ENCODE measurements at regions of chr19 and their contacts with region 1.

Region 1: DNA sequence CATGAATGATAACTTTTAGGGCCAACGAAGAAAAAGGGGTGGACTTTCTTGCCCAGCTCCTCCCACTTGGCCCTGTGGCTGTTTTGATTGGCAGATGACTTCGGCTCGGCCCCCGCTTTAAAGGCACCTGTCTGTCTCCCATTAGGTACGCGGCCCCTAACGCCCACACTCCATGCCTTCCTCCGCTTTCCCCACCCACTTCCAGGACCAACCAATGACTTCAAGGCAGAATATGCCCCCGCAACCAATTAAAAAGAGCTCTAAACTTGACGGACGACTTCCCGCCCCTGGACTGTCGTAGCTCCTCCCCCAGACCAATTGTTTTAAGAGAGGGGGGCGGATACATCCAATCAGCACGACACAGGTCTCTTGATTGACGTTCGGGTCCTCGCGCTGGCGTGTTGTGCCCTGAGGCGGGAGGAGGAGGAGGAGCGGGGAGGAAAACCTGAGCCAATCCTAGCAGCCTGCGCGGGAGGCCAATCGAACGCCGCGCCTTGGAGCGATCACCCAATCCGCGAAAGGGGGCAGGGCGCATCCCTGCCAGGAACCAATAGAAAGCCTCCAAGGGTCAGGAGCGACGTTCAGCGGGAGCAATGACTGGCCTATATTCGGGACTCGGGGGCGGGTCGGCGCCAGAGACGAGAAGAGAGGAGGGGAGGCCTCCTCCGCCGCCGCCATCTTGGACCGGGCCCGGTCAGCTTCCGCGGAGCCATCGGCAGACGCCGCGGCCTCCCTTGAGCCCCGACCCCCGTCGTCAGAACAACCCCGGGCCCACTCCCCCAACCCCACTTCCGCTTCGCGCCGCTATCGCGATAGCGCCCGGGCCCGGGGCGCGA is at the start of gene CNOT3:
- DNase-seq: peak; percentile 99 to 100 (median 100)
- ATAC-seq: peak; percentile 91 to 95 (median 94)
- H3K4me3 ChIP-seq: peak within 1 kb of the TSS; percentile 74 to 100 (median 96)
- H3K27ac ChIP-seq: peak within 1 kb of the TSS; percentile 86 to 100 (median 95)
- H3K4me1 ChIP-seq: peaks cover 5 to 48% (median 36%) of the 10 kb centered on the region in 12 donors
- H3K27me3 ChIP-seq: peaks cover 0 to 3% (median 0%) of the 10 kb centered on the region in 9 donors
- CTCF ChIP-seq: no peak
- POLR2A ChIP-seq: peak; percentile 89 to 94
- total RNA-seq, gene CNOT3: 12.6 to 28.2 (median 18.5) TPM

Region 2: DNA sequence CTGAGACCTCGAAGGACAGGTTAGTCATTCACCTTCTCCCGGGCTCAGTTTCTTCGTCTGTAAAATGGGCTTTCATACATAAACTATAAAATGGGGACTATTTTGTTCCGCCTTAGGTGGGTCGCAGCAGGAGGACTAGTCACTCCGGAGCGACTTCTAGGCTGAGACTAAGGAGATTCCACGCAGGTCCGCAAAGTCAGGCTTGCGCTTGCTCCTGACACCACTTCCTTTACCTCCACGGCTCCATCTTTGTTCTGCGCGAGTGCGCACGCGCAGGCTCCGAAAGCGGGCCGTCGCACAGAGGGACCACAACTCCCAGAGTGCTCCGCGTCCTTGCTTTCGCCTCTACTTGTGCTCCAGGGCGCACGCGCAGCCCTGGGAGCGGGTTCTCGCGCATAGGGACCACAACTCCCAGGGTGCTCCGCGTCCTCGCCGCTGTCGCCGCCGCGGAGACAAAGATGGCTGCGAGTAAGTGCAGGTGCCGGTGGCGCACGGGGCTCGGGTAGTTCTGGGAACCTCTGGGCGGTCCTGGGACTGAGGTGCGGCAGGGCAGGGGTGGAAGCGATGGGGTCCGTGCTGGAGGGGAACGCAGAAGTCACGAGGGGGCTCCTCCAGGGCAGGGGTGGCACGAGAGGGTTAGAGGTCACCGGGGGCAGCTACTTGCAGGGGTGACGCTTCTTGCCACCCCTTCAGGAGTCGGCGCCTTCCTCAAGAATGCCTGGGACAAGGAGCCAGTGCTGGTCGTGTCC is 34.7 kb before region 1 on chr19 and contains the start of gene NDUFA3:
- intact Hi-C with region 1: loop called in 1 of 10 experiments (anchors 2 kb)
- DNase-seq: peak; percentile 98 to 99 (median 99)
- ATAC-seq: peak; percentile 99 to 100 (median 99)
- H3K4me3 ChIP-seq: peak within 1 kb of the TSS; percentile 60 to 98 (median 88)
- H3K27ac ChIP-seq: peak within 1 kb of the TSS; percentile 25 to 91 (median 82)
- H3K4me1 ChIP-seq: peaks cover 3 to 18% (median 11%) of the 10 kb centered on the region in 12 donors
- H3K27me3 ChIP-seq: peaks cover 0 to 9% (median 0%) of the 10 kb centered on the region in 9 donors
- CTCF ChIP-seq: no peak
- POLR2A ChIP-seq: peak; percentile 36 to 87
- total RNA-seq, gene NDUFA3: 32.2 to 501 (median 299) TPM

Region 3: GRCh38 chr19:54115109-54116063 is 21.9 kb before region 1 on chr19 and contains the starts of genes PRPF31 and TFPT:
- intact Hi-C with region 1: loop called in 1 of 10 experiments (anchors 1 kb)
- DNase-seq: peak; percentile 96 to 98 (median 98)
- ATAC-seq: peak; percentile 93 to 96 (median 94)
- H3K4me3 ChIP-seq: peak within 1 kb of the TSS; percentile 57 to 99 (median 80)
- H3K27ac ChIP-seq: peak within 1 kb of the TSS; percentile 78 to 95 (median 92)
- H3K4me1 ChIP-seq: peaks cover 4 to 26% (median 22%) of the 10 kb centered on the region in 12 donors
- H3K27me3 ChIP-seq: no peaks in the 10 kb centered on the region
- CTCF ChIP-seq: no peak
- POLR2A ChIP-seq: peak in 1 of 2 donors; percentile 47
- total RNA-seq, gene PRPF31: 30.0 to 58.4 (median 37.8) TPM
- total RNA-seq, gene TFPT: 9.6 to 23.1 (median 12.5) TPM

Region 4: DNA sequence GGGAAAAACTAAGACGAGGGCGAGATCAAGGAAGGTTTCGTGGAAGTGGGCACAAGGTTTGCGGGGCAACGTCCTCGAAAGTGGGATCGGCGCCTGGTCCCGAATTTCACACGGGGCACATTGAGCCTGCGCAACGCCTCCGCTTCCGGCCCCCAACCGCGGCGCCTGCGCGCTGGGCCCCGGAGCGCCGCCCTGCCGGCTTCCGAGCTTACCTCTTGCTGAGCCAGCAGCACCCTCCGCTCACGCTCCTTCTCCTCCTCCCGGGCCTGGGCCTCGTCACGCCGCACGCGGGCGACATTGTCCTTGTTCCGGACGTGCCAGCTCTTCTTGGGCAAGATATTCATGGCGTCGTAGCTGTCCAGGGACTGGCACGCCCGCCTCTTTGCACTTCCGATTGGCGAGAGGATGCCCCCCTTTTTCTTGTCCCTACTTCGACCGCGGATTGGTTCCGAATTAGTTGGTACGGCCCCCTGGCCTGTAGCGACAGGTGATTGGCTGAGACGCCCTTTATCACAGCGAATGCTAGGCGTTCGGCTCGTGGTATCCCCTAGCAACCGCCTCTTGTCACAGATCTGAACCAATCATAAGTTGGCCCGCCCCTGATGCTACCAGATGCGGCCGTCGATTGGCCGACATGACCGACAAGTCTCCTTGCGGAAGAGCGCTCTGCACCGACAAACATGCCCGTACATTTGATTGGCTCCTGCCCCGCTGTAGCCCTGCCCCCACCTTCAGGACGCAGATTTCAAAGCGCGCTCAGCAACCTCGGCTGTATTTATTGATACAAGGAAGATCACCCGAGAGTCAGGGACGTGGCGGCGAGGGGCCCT is 22.3 kb after region 1 on chr19 and contains the start of gene LENG1:
- intact Hi-C with region 1: loop called in 1 of 10 experiments (anchors 1 kb)
- DNase-seq: peak; percentile 98 to 100 (median 100)
- ATAC-seq: peak; percentile 92 to 98 (median 96)
- H3K4me3 ChIP-seq: peak within 1 kb of the TSS; percentile 47 to 96 (median 78)
- H3K27ac ChIP-seq: peak within 1 kb of the TSS; percentile 89 to 99 (median 98)
- H3K4me1 ChIP-seq: peaks cover 4 to 59% (median 34%) of the 10 kb centered on the region in 12 donors
- H3K27me3 ChIP-seq: peaks cover 0 to 6% (median 0%) of the 10 kb centered on the region in 9 donors
- CTCF ChIP-seq: peak in 10 of 12 donors; percentile 30 to 68 (median 40)
- POLR2A ChIP-seq: peak in 1 of 2 donors; percentile 77
- total RNA-seq, gene LENG1: 5.4 to 8.7 (median 6.8) TPM

Region 5: GRCh38 chr19:54189735-54190502 is 52.6 kb after region 1 on chr19:
- intact Hi-C with region 1: loop called in 1 of 10 experiments (anchors 1 kb)
- DNase-seq: peak; percentile 100
- ATAC-seq: peak; percentile 79 to 84 (median 82)
- H3K4me3 ChIP-seq: peak overlapping the region; percentile 68 to 92 (median 86)
- H3K27ac ChIP-seq: peak overlapping the region; percentile 88 to 100 (median 98)
- H3K4me1 ChIP-seq: peaks cover 0 to 23% (median 17%) of the 10 kb centered on the region in 12 donors
- H3K27me3 ChIP-seq: no peaks in the 10 kb centered on the region
- CTCF ChIP-seq: no peak
- POLR2A ChIP-seq: peak in 1 of 2 donors; percentile 44